ENCODE measurements at regions of chr13 and their contacts with region 1.

Region 1: DNA sequence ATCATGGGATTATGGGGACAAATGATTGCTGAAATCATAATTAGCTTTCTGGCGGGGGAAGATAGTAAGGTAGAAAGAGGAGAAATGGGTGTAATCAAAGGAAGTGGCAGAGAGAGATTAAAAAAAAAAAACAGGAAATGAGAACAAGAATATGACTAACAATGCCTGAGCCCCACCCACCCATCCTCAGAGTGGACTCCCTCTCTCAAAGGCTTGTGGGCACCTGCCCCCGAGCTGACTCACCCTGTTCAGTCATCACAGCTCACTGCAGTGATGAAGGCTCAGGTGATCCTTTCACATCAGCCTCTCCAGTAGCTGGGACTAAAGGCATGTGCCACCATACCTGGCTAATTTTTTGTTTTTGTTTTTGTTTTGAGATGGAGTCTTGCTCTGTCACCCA is 26.4 kb upstream of the TPT1 start:
- DNase-seq: peak; percentile 97
- H3K4me3 Mint-ChIP-seq: peak overlapping the region; percentile 32
- H3K27ac Mint-ChIP-seq: peak overlapping the region; percentile 87
- H3K4me1 Mint-ChIP-seq: peaks cover 57% of the 10 kb centered on the region
- H3K27me3 Mint-ChIP-seq: no peaks in the 10 kb centered on the region

Region 2: DNA sequence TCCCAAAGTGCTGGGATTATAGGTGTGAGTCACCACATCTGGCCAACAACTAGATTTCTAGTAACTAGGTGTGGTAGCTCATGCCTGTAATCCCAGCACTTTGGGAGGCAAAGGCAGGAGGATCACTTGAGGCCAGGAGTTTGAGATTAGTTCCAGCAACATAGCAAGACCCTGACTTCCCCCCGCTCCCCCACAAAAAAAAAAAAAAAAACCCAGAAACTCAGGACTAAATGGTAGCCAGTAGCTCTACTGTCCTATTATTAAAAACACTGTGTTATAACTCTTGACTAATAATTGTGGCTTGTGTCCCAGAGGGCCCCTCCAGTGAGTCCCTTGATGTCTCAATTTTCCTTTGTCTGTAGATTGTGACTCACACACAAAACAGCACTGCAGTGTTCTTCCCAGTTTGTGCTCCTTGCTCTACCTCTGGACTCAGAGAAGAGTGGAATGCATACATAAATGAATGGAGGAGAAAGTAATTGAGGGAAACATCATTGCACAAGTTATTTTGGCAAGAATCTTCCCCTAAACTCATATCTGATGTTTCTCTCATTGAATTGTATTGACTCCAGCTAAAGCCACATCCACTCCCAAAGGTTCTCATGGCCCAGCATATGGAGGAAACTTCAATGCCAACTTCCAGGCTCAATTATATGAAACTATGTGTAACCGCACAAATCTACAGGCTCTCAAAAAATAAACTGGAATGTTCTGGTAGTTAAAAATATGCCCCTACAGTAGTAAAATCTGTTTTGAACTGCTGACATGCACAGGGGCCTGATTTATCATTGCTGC is 35.1 kb before region 1 on chr13:
- CTCF ChIA-PET with region 1: interaction called, 6 read pairs
- intact Hi-C with region 1: loop called (anchors 5 kb)
- DNase-seq: no peak
- H3K4me3 Mint-ChIP-seq: no peak overlapping the region
- H3K27ac Mint-ChIP-seq: peak overlapping the region; percentile 57
- H3K4me1 Mint-ChIP-seq: peaks cover 91% of the 10 kb centered on the region
- H3K27me3 Mint-ChIP-seq: no peaks in the 10 kb centered on the region

Region 3: GRCh38 chr13:45385907-45386553 is 18.7 kb after region 1 on chr13:
- CTCF ChIA-PET with region 1: interaction called, 15 read pairs
- intact Hi-C with region 1: no loop called
- DNase-seq: no peak
- H3K4me3 Mint-ChIP-seq: no peak overlapping the region
- H3K27ac Mint-ChIP-seq: no peak overlapping the region
- H3K4me1 Mint-ChIP-seq: no peaks in the 10 kb centered on the region
- H3K27me3 Mint-ChIP-seq: no peaks in the 10 kb centered on the region

Region 4: GRCh38 chr13:45417790-45418534 is 50.6 kb after region 1 on chr13 and contains the start of gene SLC25A30:
- CTCF ChIA-PET with region 1: interaction called, 7 read pairs
- intact Hi-C with region 1: loop called (anchors 1 kb)
- DNase-seq: peak; percentile 89
- H3K4me3 Mint-ChIP-seq: peak within 1 kb of the TSS; percentile 94
- H3K27ac Mint-ChIP-seq: peak within 1 kb of the TSS; percentile 92
- H3K4me1 Mint-ChIP-seq: peaks cover 24% of the 10 kb centered on the region
- H3K27me3 Mint-ChIP-seq: no peaks in the 10 kb centered on the region
- total RNA-seq, gene SLC25A30: 13.6 to 15.1 TPM

Region 5: GRCh38 chr13:45473627-45474026 is 106.3 kb after region 1 on chr13:
- CTCF ChIA-PET with region 1: interaction called, 15 read pairs
- intact Hi-C with region 1: no loop called
- DNase-seq: peak; percentile 46
- H3K4me3 Mint-ChIP-seq: no peak overlapping the region
- H3K27ac Mint-ChIP-seq: no peak overlapping the region
- H3K4me1 Mint-ChIP-seq: peaks cover 57% of the 10 kb centered on the region
- H3K27me3 Mint-ChIP-seq: no peaks in the 10 kb centered on the region

Region 6: GRCh38 chr13:45511310-45512097 is 144.1 kb after region 1 on chr13:
- CTCF ChIA-PET with region 1: interaction called, 5 read pairs
- intact Hi-C with region 1: loop called (anchors 1 kb)
- DNase-seq: peak; percentile 30
- H3K4me3 Mint-ChIP-seq: no peak overlapping the region
- H3K27ac Mint-ChIP-seq: no peak overlapping the region
- H3K4me1 Mint-ChIP-seq: peaks cover 8% of the 10 kb centered on the region
- H3K27me3 Mint-ChIP-seq: no peaks in the 10 kb centered on the region

Region 7: GRCh38 chr13:45847554-45848224 is 480.3 kb after region 1 on chr13:
- CTCF ChIA-PET with region 1: no interaction called
- intact Hi-C with region 1: no loop called
- DNase-seq: peak; percentile 45
- H3K4me3 Mint-ChIP-seq: peak overlapping the region; percentile 54
- H3K27ac Mint-ChIP-seq: no peak overlapping the region
- H3K4me1 Mint-ChIP-seq: peaks cover 52% of the 10 kb centered on the region
- H3K27me3 Mint-ChIP-seq: no peaks in the 10 kb centered on the region

Region 8: GRCh38 chr13:45974500-45974899 is 607.1 kb after region 1 on chr13:
- CTCF ChIA-PET with region 1: no interaction called
- intact Hi-C with region 1: no loop called
- DNase-seq: no peak
- H3K4me3 Mint-ChIP-seq: no peak overlapping the region
- H3K27ac Mint-ChIP-seq: no peak overlapping the region
- H3K4me1 Mint-ChIP-seq: no peaks in the 10 kb centered on the region
- H3K27me3 Mint-ChIP-seq: no peaks in the 10 kb centered on the region

Region 9: GRCh38 chr13:46295491-46296114 is 928.2 kb after region 1 on chr13:
- CTCF ChIA-PET with region 1: no interaction called
- intact Hi-C with region 1: loop called (anchors 10 kb)
- DNase-seq: peak; percentile 76
- H3K4me3 Mint-ChIP-seq: peak overlapping the region; percentile 61
- H3K27ac Mint-ChIP-seq: peak overlapping the region; percentile 94
- H3K4me1 Mint-ChIP-seq: peaks cover 59% of the 10 kb centered on the region
- H3K27me3 Mint-ChIP-seq: no peaks in the 10 kb centered on the region